ENCODE measurements at regions of chr1 and their contacts with region 1.

Region 1: DNA sequence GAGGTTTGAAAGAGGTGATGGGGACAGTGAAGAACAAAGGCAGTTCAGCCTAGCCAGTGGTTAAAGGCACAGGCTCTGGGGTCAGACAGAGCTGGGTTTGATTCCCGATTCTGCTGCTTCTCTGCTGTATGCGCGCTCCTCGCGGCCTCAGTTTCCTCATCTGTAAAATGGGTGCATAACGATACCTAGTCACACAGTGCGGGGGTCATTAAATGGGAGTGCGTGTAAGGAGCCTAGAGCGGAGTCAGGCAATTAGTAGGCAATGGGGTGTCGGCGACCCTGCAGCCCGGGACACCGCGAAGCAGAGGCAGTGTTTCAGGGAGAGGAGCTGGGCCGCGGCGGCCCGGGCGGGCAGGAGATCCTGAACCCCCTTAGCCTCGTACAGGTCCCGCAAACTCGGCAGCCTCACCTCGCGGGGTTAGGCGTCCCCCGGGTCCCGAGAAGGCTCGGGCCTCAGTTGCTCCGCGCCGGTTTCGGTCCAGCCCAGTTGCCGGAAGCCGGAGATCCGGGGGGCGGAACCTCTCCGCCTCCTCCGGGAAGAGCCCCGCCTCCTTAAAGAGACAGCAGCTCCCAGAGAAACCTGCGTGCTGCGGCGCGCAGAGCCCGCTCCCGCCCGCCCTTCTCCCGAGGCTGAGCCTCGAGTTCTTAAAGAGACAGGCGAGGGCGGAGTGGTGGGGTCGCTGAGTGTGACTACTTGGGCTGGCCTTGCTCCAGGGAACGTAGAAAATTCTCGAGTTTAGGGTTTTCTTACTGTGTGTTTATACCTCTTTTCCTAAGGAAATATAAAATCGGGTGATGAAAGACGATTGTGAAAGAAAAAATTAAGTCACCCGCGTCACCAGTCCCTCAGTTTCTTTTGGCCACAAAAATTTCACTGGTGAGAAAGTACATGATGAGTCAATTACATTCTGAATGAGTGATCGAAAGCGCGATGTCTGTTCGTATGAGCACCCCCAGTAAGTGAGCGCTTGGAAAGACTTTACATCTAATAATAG is at the start of gene YIPF1:
- DNase-seq: peak; percentile 91
- H3K4me3 Mint-ChIP-seq: peak within 1 kb of the TSS; percentile 94
- H3K27ac Mint-ChIP-seq: peak within 1 kb of the TSS; percentile 99
- H3K4me1 Mint-ChIP-seq: peaks cover 39% of the 10 kb centered on the region
- H3K27me3 Mint-ChIP-seq: no peaks in the 10 kb centered on the region
- total RNA-seq, gene YIPF1: 22.2 to 22.4 TPM

Region 2: DNA sequence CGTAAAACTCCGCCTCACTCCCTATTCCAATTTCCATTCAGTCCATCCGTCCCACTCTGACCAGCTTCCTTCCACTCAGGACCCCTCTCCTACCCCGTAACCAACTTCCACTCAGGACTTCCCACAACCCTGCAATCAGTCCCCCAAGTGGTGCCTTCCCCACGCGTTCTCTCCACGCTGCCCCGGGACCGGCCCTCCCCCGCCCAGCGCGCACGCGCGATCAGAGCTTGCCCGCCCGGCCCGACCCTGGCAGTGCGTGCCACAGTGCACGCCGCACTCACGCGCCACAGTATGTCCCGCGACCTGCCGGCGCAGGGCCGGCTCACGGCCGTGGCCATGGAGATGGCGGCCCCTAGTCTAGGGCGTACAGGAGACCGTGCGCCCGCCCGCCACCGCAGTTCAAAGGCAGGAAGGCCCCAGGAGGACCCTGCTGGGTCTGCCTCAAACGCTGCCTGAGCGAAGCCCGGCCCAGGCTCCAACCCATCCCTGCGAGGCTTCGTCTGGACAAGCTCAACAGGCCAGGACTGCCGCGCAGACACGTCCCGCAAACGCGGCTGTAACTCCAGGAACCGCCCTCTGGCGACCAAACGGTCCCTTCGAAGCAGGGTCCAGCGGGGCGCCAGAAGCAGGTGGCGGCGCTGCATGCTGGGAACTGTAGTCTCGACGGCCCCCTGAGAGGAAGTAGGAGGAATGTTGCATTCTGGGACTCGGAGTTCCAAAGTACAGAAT is 51.5 kb before region 1 on chr1 and contains the start of gene NDC1:
- CTCF ChIA-PET with region 1: no interaction called
- intact Hi-C with region 1: loop called (anchors 1 kb)
- DNase-seq: peak; percentile 92
- H3K4me3 Mint-ChIP-seq: peak within 1 kb of the TSS; percentile 100
- H3K27ac Mint-ChIP-seq: peak within 1 kb of the TSS; percentile 96
- H3K4me1 Mint-ChIP-seq: peaks cover 27% of the 10 kb centered on the region
- H3K27me3 Mint-ChIP-seq: no peaks in the 10 kb centered on the region
- total RNA-seq, gene NDC1: 25.9 to 27.9 TPM

Region 3: DNA sequence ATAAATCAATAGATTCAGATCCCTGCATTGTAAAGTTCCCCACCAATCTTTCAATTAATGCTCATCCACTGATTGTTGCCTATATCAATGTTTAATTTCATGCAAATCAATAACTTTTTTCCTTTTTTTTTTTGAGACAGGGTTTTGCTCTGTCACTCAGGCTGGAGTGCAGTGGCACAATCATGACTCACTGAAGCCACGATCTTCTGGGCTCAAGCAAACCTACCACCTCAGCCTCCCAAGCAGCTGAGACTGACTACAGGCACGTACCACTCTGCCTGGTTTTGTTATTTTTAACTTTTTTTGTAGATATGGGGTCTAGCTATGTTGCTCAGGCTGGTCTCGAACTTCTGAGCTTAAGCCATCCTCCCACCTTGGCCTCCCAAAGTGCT is 30.1 kb after region 1 on chr1:
- CTCF ChIA-PET with region 1: interaction called, 3 read pairs
- intact Hi-C with region 1: loop called (anchors 1 kb)
- DNase-seq: peak; percentile 38
- H3K4me3 Mint-ChIP-seq: no peak overlapping the region
- H3K27ac Mint-ChIP-seq: peak overlapping the region; percentile 14
- H3K4me1 Mint-ChIP-seq: peaks cover 37% of the 10 kb centered on the region
- H3K27me3 Mint-ChIP-seq: no peaks in the 10 kb centered on the region

Region 4: GRCh38 chr1:54474639-54475251 is 585.1 kb after region 1 on chr1:
- CTCF ChIA-PET with region 1: no interaction called
- intact Hi-C with region 1: loop called (anchors 2 kb)
- DNase-seq: peak; percentile 57
- H3K4me3 Mint-ChIP-seq: peak overlapping the region; percentile 64
- H3K27ac Mint-ChIP-seq: no peak overlapping the region
- H3K4me1 Mint-ChIP-seq: peaks cover 43% of the 10 kb centered on the region
- H3K27me3 Mint-ChIP-seq: no peaks in the 10 kb centered on the region